ENCODE measurements at regions of chr10 and their contacts with region 1.

Region 1: GRCh38 chr10:44682507-44682906 is 228.6 kb upstream of the TMEM72 start:
- DNase-seq: no peak
- H3K4me3 ChIP-seq: no peak overlapping the region
- H3K27ac ChIP-seq: no peak overlapping the region
- H3K4me1 ChIP-seq: no peaks in the 10 kb centered on the region
- H3K27me3 ChIP-seq: no peaks in the 10 kb centered on the region
- CTCF ChIP-seq: no peak
- POLR2A ChIP-seq: no peak

Region 2: DNA sequence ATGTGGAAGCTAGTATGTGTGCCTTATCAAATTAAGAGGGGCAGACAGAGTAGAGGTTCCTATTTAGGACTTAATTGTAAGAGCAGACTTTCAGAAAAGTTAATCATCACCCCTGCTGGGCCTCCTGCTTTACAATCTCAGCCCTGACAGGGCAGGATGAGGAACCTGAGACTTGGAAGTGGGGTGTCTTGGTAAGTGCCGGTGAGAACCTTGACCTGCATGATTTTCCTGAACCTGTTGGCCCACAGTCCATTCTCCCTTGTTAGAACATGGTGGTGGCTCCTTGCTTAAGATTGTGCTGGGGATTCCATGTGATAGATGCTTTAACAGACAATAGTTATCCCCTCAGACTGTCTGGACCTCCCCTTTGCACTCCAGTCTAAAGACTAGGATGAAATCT is 86.9 kb after region 1 on chr10:
- intact Hi-C with region 1: loop called (anchors 5 kb)
- DNase-seq: no peak
- H3K4me3 ChIP-seq: no peak overlapping the region
- H3K27ac ChIP-seq: no peak overlapping the region
- H3K4me1 ChIP-seq: no peaks in the 10 kb centered on the region
- H3K27me3 ChIP-seq: no peaks in the 10 kb centered on the region
- CTCF ChIP-seq: no peak
- POLR2A ChIP-seq: no peak